ENCODE measurements at regions of chr17 and their contacts with region 1.

Region 1: DNA sequence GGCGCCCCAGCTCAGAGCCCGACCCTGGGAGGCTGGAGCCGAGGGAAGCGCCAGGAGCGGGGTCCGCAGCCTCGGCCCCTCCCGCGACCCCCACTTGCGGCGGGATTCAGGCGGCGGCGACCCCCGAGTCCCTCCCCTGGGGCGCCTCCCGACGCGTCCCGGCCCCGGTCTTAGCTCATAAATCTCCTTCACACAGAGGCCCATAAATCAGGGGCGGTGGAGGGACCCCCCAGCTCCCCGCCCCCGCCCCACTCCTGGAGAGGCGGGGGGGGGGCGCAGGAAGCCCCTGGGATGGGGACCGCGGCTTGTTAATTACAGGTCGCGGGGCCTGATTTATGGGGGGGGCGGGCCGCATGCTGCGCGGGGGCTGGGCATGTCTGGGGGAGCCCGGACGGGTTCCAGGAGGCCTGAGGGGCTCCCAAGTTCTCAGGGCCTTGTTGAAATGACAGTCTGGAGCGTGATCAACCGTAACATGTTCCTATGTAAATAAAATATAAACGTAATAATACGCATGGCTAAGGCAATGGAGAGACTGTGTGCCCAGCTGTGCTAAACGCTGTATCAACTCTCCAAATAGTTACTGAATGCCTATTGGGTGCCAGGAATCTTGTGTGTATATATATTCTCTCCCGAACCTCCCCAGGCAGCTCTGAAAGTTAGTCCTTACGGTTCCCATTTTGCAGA is 10.0 kb upstream of the BHLHA9 start:
- DNase-seq: no peak
- ATAC-seq: no peak
- H3K4me3 ChIP-seq: peak overlapping the region in 4 of 5 experiments; percentile 32 to 67 (median 47)
- H3K4me3 Mint-ChIP-seq: peak overlapping the region; percentile 63
- H3K27ac ChIP-seq: no peak overlapping the region
- H3K27ac Mint-ChIP-seq: no peak overlapping the region
- H3K4me1 ChIP-seq: peaks cover 3 to 13% of the 10 kb centered on the region in 2 donors
- H3K4me1 Mint-ChIP-seq: peaks cover 12% of the 10 kb centered on the region
- H3K27me3 ChIP-seq: peaks cover 0 to 45% (median 16%) of the 10 kb centered on the region in 4 experiments
- H3K27me3 Mint-ChIP-seq: peaks cover 26% of the 10 kb centered on the region
- CTCF ChIP-seq: no peak

Region 2: DNA sequence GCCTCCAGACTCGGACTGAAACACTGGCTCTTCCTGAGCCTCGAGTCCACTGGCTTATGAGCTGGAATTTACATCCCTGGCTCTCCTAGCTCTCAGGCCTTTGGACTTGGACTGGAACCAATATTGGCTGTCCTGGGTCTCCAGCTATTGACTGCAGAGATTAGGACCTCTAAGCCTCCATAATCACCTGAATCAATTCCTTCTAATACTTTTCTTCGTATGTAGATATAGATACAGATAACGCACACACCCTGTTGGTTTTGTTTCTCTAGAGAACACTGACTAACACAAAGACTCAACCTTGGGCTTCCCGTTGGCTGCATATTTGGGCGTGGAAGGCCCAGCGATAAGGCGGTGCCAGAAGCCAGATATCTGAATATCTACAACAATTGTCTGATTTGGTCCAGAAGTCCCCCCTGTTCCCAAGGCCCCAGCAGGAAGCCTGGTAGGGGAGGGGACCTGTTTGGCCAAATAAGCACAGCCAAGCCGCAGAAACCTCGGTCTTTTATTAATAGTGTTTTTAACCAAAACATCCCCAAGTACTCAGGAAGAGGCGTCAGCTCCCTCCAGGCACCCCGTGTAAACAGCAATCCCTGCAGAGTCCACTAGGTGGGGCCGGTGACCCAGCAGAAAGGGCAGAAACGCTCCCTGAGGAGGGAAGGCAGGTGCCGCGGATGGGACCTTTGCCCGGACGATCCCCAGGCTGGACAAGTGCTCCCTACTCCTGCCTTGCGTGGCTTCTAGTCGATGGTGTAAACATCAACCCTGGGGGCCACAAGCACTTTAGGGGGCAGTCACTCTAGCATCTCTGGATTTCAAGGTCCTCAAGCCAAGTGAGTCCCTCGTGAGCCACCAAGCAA is 137.5 kb before region 1 on chr17:
- CTCF ChIA-PET with region 1: interaction called, 10 read pairs
- POLR2A ChIA-PET with region 1: no interaction called
- intact Hi-C with region 1: loop called (anchors 2 kb)
- DNase-seq: peak; percentile 85
- ATAC-seq: peak; percentile 95
- H3K4me3 ChIP-seq: no peak overlapping the region
- H3K4me3 Mint-ChIP-seq: no peak overlapping the region
- H3K27ac ChIP-seq: no peak overlapping the region
- H3K27ac Mint-ChIP-seq: no peak overlapping the region
- H3K4me1 ChIP-seq: peaks cover 12% of the 10 kb centered on the region in 2 donors
- H3K4me1 Mint-ChIP-seq: peaks cover 15% of the 10 kb centered on the region
- H3K27me3 ChIP-seq: no peaks in the 10 kb centered on the region
- H3K27me3 Mint-ChIP-seq: no peaks in the 10 kb centered on the region
- CTCF ChIP-seq: peak; percentile 92

Region 3: GRCh38 chr17:3197219-3197618 is 1937.0 kb after region 1 on chr17 and contains the start of gene OR1A2:
- CTCF ChIA-PET with region 1: no interaction called
- POLR2A ChIA-PET with region 1: no interaction called
- intact Hi-C with region 1: no loop called
- DNase-seq: no peak
- ATAC-seq: no peak
- H3K4me3 ChIP-seq: no peak within 1 kb of the TSS
- H3K4me3 Mint-ChIP-seq: no peak within 1 kb of the TSS
- H3K27ac ChIP-seq: no peak within 1 kb of the TSS
- H3K27ac Mint-ChIP-seq: no peak within 1 kb of the TSS
- H3K4me1 ChIP-seq: no peaks in the 10 kb centered on the region
- H3K4me1 Mint-ChIP-seq: no peaks in the 10 kb centered on the region
- H3K27me3 ChIP-seq: peaks cover 0 to 9% (median 2%) of the 10 kb centered on the region in 4 experiments
- H3K27me3 Mint-ChIP-seq: peaks cover 40% of the 10 kb centered on the region
- CTCF ChIP-seq: no peak
- total RNA-seq, gene OR1A2: not detected in 2 replicates